Mucosa of descending colon (tissue), 3 donors: ENCODE measurements at regions of chr1 and their contacts with region 1.

Region 1: DNA sequence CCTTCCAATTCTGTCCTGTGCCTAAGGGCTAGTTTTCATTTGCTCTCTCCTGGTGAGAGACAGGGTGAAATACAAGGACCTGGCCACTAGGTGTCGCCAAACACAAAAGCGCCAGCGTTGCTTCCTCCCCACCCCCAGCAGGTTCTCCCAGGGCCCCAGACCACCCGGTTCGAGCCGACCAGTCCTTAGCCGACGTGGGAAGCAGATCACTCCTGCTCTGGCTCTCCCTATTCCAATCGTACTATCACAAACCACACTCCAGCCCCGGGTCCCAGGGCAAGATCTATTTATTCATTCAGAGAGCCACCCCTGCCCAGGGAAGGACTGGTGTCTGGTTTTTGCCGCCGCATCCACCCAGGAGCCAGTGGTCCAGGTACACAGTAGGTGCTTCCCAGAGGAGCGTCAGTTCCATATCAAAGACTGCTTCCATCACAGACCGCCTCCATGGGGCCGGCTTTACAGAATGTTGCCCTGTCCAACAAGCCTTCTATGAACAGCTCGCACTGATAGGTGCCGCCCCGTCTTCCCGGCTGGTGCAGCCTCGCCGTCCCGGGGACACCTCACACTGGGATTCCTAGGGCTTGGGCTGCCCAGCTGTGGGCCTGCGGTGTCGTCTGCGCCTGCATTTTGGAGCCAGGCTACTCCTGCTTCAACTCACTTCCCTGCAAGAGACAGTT is 35.0 kb downstream of the CTNNBIP1 start:
- DNase-seq: peak in 2 of 3 donors; percentile 71 to 73
- ATAC-seq: peak; percentile 79
- H3K4me3 ChIP-seq: no peak overlapping the region
- H3K4me1 ChIP-seq: no peaks in the 10 kb centered on the region
- CTCF ChIP-seq: peak; percentile 88

Region 2: GRCh38 chr1:9929431-9930385 is 54.6 kb after region 1 on chr1:
- intact Hi-C with region 1: loop called in 1 of 2 experiments (anchors 2 kb)
- DNase-seq: no peak
- ATAC-seq: no peak
- H3K4me3 ChIP-seq: no peak overlapping the region
- H3K4me1 ChIP-seq: peaks cover 4% of the 10 kb centered on the region
- CTCF ChIP-seq: no peak

Region 3: GRCh38 chr1:9942939-9943788 is 68.1 kb after region 1 on chr1 and contains the starts of genes LZIC and NMNAT1:
- intact Hi-C with region 1: loop called in 1 of 2 experiments (anchors 10 kb)
- DNase-seq: peak; percentile 95 to 96 (median 95)
- ATAC-seq: peak; percentile 99
- H3K4me3 ChIP-seq: peak within 1 kb of the TSS; percentile 49
- H3K4me1 ChIP-seq: peaks cover 8% of the 10 kb centered on the region
- CTCF ChIP-seq: no peak
- total RNA-seq, gene LZIC: 36.3 to 43.7 (median 39.9) TPM
- total RNA-seq, gene NMNAT1: 19.0 to 21.8 (median 20.6) TPM

Region 4: GRCh38 chr1:10007169-10007568 is 132.1 kb after region 1 on chr1:
- intact Hi-C with region 1: no loop called
- DNase-seq: no peak
- ATAC-seq: no peak
- H3K4me3 ChIP-seq: no peak overlapping the region
- H3K4me1 ChIP-seq: no peaks in the 10 kb centered on the region
- CTCF ChIP-seq: no peak